WTC11 (cell line): ENCODE measurements at regions of chr7 and their contacts with region 1.

Region 1: GRCh38 chr7:65216459-65216858 is 157.2 kb upstream of the ZNF92 start:
- DNase-seq: peak; percentile 74
- ATAC-seq: peak; percentile 78
- H3K4me3 Mint-ChIP-seq: 0 out of 2 replicates have a peak overlapping the region, but pooled peaks have one; percentile 16
- H3K27ac Mint-ChIP-seq: no peak overlapping the region
- H3K4me1 Mint-ChIP-seq: no peaks in the 10 kb centered on the region
- H3K27me3 Mint-ChIP-seq: no peaks in the 10 kb centered on the region
- CTCF ChIP-seq: peak; percentile 82

Region 2: GRCh38 chr7:65307651-65308299 is 91.3 kb after region 1 on chr7:
- CTCF ChIA-PET with region 1: interaction called, 11 read pairs
- POLR2A ChIA-PET with region 1: interaction called, 3 read pairs
- DNase-seq: peak; percentile 69
- ATAC-seq: peak; percentile 96
- H3K4me3 Mint-ChIP-seq: no peak overlapping the region
- H3K27ac Mint-ChIP-seq: no peak overlapping the region
- H3K4me1 Mint-ChIP-seq: no peaks in the 10 kb centered on the region
- H3K27me3 Mint-ChIP-seq: no peaks in the 10 kb centered on the region
- CTCF ChIP-seq: peak; percentile 70

Region 3: DNA sequence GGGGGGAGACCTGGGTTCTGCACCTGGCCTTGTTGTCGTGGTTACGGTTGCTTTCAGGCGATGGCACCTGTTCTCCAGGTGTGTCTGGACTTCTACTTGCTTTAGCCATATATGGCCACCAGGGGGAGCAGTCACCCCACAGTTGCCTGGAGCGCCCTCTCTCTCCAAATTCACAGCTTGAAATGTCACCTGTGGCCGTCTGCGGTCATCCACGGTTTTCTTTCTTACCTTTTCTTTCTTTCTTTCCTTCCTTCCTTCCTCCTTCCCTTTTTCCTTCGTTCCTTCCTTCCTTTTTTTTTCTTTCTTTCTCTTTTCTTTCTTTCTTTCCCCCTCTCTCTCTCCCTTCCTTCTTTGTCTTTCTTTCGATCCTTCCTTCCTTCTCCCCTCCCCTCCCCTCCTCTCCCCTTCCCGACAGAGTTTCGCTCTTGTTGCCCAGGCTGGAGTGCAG is 505.9 kb after region 1 on chr7:
- CTCF ChIA-PET with region 1: interaction called, 20 read pairs
- POLR2A ChIA-PET with region 1: no interaction called
- DNase-seq: peak; percentile 78
- ATAC-seq: peak; percentile 80
- H3K4me3 Mint-ChIP-seq: no peak overlapping the region
- H3K27ac Mint-ChIP-seq: peak overlapping the region; percentile 45; the same call in 1 of the 2 replicates
- H3K4me1 Mint-ChIP-seq: no peaks in the 10 kb centered on the region
- H3K27me3 Mint-ChIP-seq: no peaks in the 10 kb centered on the region
- CTCF ChIP-seq: peak; percentile 81